SK-N-SH (cell line): ENCODE measurements at regions of chr17 and their contacts with region 1.

Region 1: DNA sequence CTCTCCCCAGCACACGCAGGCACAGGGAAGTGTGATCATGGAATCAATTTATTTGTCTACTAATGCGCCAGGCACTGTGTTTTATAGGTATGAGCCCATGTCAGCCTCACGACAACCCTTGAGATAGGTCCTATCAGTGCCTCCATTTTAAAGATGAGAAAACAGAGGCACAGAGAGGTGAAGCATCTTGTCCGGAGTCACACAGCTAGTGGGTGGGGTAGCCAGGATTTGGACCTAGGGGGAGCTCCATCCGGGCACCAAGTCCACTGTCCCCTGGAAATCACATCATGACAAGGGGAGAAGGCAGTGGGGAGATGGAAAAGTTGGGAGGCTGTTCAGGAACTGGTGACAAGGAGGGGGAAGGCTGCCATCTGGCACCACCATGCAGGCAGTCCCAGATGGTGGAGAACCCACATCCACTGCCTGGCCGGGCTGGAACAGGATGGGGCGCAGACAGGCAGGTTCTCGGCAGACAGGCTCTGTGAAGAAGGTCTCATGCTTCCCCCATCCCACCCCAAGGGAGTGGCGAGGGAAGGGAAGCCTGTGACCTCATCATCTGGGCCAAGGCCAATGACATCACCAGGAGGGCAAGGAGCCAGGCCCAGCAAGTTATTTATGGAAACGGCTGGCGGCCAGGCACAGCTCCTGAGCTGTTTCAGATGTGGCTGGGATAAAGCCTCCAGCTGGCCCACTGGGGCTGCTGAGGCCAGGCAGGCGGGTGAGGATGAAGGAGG is 126.0 kb upstream of the SDK2 start:
- DNase-seq: peak; percentile 88
- H3K4me3 ChIP-seq: no peak overlapping the region; a peak in 1 of 4 replicates
- H3K27ac ChIP-seq: peak overlapping the region in 1 of 2 experiments; percentile 86; a peak in 3 of 4 replicates
- H3K4me1 ChIP-seq: peaks cover 0 to 53% of the 10 kb centered on the region in 2 experiments; a peak in 2 of 4 replicates
- H3K27me3 ChIP-seq: no peaks in the 10 kb centered on the region
- CTCF ChIP-seq: no peak
- EP300 ChIP-seq: peak in 1 of 2 experiments; percentile 77; a peak in 2 of 4 replicates
- RAD21 ChIP-seq: no peak

Region 2: DNA sequence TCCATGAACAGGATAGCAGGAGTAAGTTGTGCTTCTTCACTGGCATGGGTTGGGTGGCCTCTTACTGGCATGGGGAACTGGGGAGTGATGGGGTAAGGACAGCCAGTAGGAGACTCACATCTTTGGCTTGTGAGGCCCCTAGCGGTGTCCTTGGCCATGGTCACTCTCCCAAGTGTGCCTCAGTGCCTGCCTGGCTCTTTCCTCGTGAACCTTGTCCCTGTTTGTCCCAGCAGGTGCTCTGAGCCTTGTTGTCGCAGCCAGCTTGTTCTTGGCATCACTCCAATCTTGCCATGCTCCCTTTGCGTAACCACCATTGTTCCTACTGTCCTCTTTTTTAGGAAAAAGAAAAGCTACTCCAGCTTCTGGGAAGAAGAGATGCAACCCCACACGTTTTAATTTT is 72.4 kb before region 1 on chr17:
- CTCF ChIA-PET with region 1: no interaction called
- POLR2A ChIA-PET with region 1: no interaction called
- DNase-seq: no peak
- H3K4me3 ChIP-seq: no peak overlapping the region
- H3K27ac ChIP-seq: no peak overlapping the region
- H3K4me1 ChIP-seq: peaks cover 0 to under 1% of the 10 kb centered on the region in 2 experiments; a peak in 1 of 4 replicates
- H3K27me3 ChIP-seq: no peaks in the 10 kb centered on the region
- CTCF ChIP-seq: no peak
- EP300 ChIP-seq: no peak
- RAD21 ChIP-seq: 0 out of 2 replicates have a peak, but pooled peaks have one; percentile 2

Region 3: GRCh38 chr17:73719588-73720071 is 50.7 kb before region 1 on chr17:
- CTCF ChIA-PET with region 1: interaction called, 10 read pairs
- POLR2A ChIA-PET with region 1: interaction called, 8 read pairs
- DNase-seq: peak; percentile 96
- H3K4me3 ChIP-seq: no peak overlapping the region
- H3K27ac ChIP-seq: peak overlapping the region in 1 of 2 experiments; percentile 95; a peak in 2 of 4 replicates
- H3K4me1 ChIP-seq: peaks cover 0 to 49% of the 10 kb centered on the region in 2 experiments; a peak in 1 of 4 replicates
- H3K27me3 ChIP-seq: no peaks in the 10 kb centered on the region
- CTCF ChIP-seq: no peak
- EP300 ChIP-seq: peak in 1 of 2 experiments; percentile 95; a peak in 2 of 4 replicates
- RAD21 ChIP-seq: peak; percentile 9

Region 4: DNA sequence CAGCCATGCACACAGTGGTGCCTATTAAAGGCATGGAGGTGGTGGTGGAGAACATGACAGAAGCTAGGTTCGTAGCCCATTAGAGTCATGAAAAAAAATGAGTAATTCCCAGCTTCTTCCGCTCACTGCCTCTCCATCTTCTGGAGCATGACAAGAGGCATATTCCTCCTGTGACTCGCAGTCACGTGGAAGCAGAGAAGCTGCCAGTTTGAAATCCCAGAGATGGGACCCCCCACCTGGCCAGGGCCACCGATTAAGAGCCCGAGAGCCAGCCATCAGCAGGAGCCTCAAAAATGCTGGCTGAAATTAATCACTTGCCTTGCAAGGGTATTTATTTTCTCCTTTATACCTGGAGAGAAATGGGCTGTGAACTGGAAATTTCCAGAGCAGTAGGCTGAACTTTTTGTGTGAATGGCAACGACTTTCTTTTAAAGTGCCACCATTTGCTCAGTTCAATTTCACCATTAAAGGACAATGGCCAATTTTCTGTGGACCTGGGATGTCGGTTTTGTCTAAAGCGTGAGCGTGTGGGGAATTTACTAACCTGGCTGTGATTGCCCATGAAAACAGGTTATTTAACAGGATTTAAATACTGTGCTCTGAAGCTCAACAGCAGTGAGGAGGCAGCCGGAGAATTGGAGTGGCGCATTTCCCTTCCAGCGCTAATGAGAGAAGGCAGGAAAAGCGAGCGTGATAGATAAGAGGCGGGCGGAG is 63.6 kb after region 1 on chr17:
- CTCF ChIA-PET with region 1: no interaction called
- POLR2A ChIA-PET with region 1: no interaction called
- DNase-seq: no peak
- H3K4me3 ChIP-seq: no peak overlapping the region
- H3K27ac ChIP-seq: no peak overlapping the region
- H3K4me1 ChIP-seq: peaks cover 0 to 7% of the 10 kb centered on the region in 2 experiments; a peak in 1 of 4 replicates
- H3K27me3 ChIP-seq: no peaks in the 10 kb centered on the region
- CTCF ChIP-seq: no peak
- EP300 ChIP-seq: no peak
- RAD21 ChIP-seq: no peak

Region 5: GRCh38 chr17:73847952-73848351 is 77.7 kb after region 1 on chr17:
- CTCF ChIA-PET with region 1: no interaction called
- POLR2A ChIA-PET with region 1: no interaction called
- DNase-seq: no peak
- H3K4me3 ChIP-seq: no peak overlapping the region
- H3K27ac ChIP-seq: no peak overlapping the region
- H3K4me1 ChIP-seq: no peaks in the 10 kb centered on the region
- H3K27me3 ChIP-seq: no peaks in the 10 kb centered on the region
- CTCF ChIP-seq: no peak
- EP300 ChIP-seq: no peak
- RAD21 ChIP-seq: no peak